ENCODE measurements at regions of chr16 and their contacts with region 1.

Region 1: DNA sequence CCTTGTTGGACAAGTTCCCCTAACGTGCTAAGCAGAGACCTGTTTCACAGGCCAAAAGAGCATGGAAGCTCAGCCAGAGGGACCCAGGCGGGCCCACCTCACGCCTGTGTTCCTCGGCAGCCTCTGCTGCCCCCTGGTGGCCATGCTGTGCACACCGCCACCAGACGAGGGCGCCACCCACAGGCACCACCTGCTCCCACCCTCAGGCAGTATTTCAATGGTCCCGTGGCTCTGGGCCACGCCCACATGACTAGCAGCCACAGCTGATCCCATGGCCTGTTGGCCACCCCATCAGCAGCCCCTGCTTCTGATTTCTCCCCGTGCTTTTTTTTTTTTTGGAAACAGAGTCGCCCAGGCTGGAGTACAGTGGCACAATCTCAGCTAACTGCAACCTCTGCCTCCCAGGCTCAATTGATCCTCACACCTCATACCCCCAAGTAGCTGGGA is 18.9 kb downstream of the MPG start:
- DNase-seq: peak; percentile 95
- ATAC-seq: peak; percentile 99
- H3K4me3 Mint-ChIP-seq: no peak overlapping the region
- H3K27ac Mint-ChIP-seq: no peak overlapping the region
- H3K4me1 Mint-ChIP-seq: peaks cover 6% of the 10 kb centered on the region
- H3K27me3 Mint-ChIP-seq: no peaks in the 10 kb centered on the region
- CTCF ChIP-seq: peak; percentile 99

Region 2: DNA sequence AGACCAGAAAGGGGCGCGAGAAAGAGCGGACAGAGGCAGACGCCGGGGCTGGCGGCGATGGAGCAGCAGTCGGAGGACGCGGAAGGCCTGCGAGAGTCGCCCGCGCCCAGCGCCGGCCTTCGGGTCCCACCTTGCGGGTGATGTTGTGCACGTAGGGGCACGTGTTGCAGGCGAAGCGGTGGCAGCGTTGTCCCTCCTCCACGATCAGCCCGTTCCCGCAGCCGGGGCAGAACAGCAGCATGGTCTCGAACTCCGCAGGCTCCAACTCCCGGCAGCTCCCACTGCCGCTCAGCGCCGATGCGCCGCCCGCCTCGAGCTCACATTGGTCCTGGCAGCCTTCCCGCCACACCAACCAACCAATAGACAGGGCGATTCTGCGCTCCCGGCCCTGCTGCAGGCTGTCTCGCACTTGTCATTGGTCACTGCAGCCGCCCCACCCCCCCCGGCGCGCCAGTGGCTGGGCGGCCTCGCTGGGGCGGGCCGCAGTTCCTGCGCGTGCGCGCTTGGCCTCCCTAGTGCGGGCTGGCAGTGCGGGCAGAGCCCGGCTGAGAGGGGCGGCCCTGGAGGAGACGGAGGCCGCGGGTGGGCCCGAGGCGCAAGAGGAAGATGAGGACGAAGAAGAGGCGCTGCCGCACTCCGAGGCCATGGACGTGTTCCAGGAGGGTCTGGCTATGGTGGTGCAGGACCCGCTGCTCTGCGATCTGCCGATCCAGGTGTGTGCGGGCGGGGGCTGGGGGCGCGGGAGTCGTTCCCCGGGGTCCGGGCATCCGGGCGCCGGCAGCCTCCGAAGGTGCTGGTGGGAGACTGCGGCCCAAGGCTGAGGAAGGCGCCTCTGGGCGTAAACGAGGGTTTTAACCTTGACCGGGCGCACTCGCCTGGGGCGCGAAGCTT is 43.4 kb before region 1 on chr16 and contains the starts of genes POLR3K and SNRNP25:
- CTCF ChIA-PET with region 1: interaction called, 13 read pairs
- POLR2A ChIA-PET with region 1: no interaction called
- intact Hi-C with region 1: no loop called
- DNase-seq: peak; percentile 99
- ATAC-seq: peak; percentile 98
- H3K4me3 Mint-ChIP-seq: peak within 1 kb of the TSS; percentile 97
- H3K27ac Mint-ChIP-seq: peak within 1 kb of the TSS; percentile 97
- H3K4me1 Mint-ChIP-seq: peaks cover 26% of the 10 kb centered on the region
- H3K27me3 Mint-ChIP-seq: no peaks in the 10 kb centered on the region
- CTCF ChIP-seq: no peak
- total RNA-seq, gene POLR3K: 51.3 to 52.6 TPM
- total RNA-seq, gene SNRNP25: 39.4 to 39.7 TPM

Region 3: DNA sequence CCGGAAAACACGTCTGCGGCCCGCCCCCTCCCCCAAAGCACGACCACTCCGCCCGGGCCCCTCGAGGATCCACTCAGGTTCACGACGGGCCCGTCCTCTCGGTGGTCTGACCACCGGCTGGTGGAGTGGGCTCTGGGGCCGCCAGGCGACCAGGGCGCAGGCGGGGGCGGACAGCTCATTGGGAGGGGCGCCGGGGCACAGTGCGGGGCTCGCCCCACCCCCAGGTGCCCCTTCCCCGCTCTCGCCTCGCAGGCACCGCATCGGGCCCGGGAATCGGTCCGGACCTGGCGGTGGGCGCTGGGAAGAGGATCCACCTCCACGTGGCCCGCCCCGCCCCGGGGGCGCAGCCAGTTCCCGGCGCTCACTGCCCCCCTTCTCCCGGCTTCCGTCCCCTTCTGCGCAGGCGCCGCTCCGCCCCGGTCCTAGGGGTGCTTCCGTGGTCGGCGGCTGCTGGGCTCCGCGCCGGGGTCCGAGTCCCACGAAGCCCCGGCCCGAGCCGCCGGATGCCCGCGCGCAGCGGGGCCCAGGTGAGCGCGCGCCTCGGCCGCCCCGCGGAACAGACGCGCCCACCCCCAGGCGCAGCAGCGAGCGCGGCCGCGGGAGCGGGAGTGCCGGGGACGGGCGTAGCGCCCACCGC is 19.0 kb before region 1 on chr16 and contains the start of gene MPG:
- CTCF ChIA-PET with region 1: interaction called, 458 read pairs
- POLR2A ChIA-PET with region 1: interaction called, 10 read pairs
- intact Hi-C with region 1: no loop called
- DNase-seq: peak; percentile 83
- ATAC-seq: peak; percentile 81
- H3K4me3 Mint-ChIP-seq: peak within 1 kb of the TSS; percentile 88
- H3K27ac Mint-ChIP-seq: peak within 1 kb of the TSS; percentile 87
- H3K4me1 Mint-ChIP-seq: peaks cover 33% of the 10 kb centered on the region
- H3K27me3 Mint-ChIP-seq: peaks cover 16% of the 10 kb centered on the region
- CTCF ChIP-seq: no peak
- total RNA-seq, gene MPG: 51.7 to 54.2 TPM

Region 4: GRCh38 chr16:84718-85406 is 12.1 kb before region 1 on chr16:
- CTCF ChIA-PET with region 1: interaction called, 458 read pairs
- POLR2A ChIA-PET with region 1: interaction called, 7 read pairs
- intact Hi-C with region 1: no loop called
- DNase-seq: peak; percentile 92
- ATAC-seq: peak; percentile 91
- H3K4me3 Mint-ChIP-seq: peak overlapping the region; percentile 14
- H3K27ac Mint-ChIP-seq: peak overlapping the region; percentile 92
- H3K4me1 Mint-ChIP-seq: peaks cover 36% of the 10 kb centered on the region
- H3K27me3 Mint-ChIP-seq: no peaks in the 10 kb centered on the region
- CTCF ChIP-seq: no peak

Region 5: DNA sequence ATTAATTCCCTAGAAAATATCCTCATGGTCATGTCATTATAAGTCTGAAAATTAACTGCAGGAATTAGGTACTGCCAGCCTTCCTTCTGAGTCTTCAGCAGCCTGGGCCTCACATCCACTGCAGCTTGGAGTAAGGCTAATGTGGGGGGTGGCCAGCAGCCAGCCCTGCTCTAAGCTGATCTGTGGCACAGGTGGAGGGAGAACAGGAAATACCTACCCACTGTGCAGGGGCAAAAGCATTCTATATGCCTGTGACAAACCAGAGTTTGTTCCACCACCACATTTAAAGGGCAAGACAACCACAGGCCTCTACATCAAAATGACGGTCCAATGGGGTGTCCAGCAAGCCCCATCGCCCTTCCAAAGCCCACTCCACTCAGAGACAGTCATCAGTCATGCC is 32.1 kb after region 1 on chr16:
- CTCF ChIA-PET with region 1: interaction called, 14 read pairs
- POLR2A ChIA-PET with region 1: no interaction called
- intact Hi-C with region 1: no loop called
- DNase-seq: peak; percentile 26
- ATAC-seq: peak; percentile 74
- H3K4me3 Mint-ChIP-seq: no peak overlapping the region
- H3K27ac Mint-ChIP-seq: peak overlapping the region; percentile 3
- H3K4me1 Mint-ChIP-seq: peaks cover 31% of the 10 kb centered on the region
- H3K27me3 Mint-ChIP-seq: no peaks in the 10 kb centered on the region
- CTCF ChIP-seq: no peak

Region 6: DNA sequence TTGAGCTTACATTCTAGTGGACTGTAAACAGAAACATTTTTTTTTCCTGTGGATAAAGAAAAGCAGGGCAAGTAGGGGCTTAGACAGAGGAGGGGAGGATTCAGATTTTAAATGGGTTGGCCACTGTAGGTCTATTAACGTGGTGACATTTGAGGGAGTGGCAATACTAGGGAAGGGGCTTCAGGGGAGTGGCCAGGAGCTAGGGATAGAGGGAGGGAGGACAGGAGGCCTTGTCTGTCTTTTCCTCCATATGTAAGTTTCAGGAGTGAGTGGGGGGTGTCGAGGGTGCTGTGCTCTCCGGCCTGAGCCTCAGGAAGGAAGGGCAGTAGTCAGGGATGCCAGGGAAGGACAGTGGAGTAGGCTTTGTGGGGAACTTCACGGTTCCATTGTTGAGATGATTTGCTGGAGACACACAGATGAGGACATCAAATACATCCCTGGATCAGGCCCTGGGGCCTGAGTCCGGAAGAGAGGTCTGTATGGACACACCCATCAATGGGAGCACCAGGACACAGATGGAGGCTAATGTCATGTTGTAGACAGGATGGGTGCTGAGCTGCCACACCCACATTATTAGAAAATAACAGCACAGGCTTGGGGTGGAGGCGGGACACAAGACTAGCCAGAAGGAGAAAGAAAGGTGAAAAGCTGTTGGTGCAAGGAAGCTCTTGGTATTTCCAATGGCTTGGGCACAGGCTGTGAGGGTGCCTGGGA is 62.3 kb after region 1 on chr16:
- CTCF ChIA-PET with region 1: no interaction called
- POLR2A ChIA-PET with region 1: no interaction called
- intact Hi-C with region 1: no loop called
- DNase-seq: no peak
- ATAC-seq: no peak
- H3K4me3 Mint-ChIP-seq: no peak overlapping the region
- H3K27ac Mint-ChIP-seq: no peak overlapping the region
- H3K4me1 Mint-ChIP-seq: peaks cover 7% of the 10 kb centered on the region
- H3K27me3 Mint-ChIP-seq: peaks cover 39% of the 10 kb centered on the region
- CTCF ChIP-seq: no peak

Region 7: GRCh38 chr16:401468-402348 is 304.8 kb after region 1 on chr16 and contains the start of gene DECR2:
- CTCF ChIA-PET with region 1: no interaction called
- POLR2A ChIA-PET with region 1: no interaction called
- intact Hi-C with region 1: no loop called
- DNase-seq: peak; percentile 99
- ATAC-seq: peak; percentile 93
- H3K4me3 Mint-ChIP-seq: peak within 1 kb of the TSS; percentile 83
- H3K27ac Mint-ChIP-seq: peak within 1 kb of the TSS; percentile 83
- H3K4me1 Mint-ChIP-seq: peaks cover 13% of the 10 kb centered on the region
- H3K27me3 Mint-ChIP-seq: peaks cover under 1% of the 10 kb centered on the region
- CTCF ChIP-seq: peak; percentile 68
- total RNA-seq, gene DECR2: 9.7 to 10.0 TPM